Endothelial cell of umbilical vein (primary cell): ENCODE measurements at regions of chr18 and their contacts with region 1.

Region 1: DNA sequence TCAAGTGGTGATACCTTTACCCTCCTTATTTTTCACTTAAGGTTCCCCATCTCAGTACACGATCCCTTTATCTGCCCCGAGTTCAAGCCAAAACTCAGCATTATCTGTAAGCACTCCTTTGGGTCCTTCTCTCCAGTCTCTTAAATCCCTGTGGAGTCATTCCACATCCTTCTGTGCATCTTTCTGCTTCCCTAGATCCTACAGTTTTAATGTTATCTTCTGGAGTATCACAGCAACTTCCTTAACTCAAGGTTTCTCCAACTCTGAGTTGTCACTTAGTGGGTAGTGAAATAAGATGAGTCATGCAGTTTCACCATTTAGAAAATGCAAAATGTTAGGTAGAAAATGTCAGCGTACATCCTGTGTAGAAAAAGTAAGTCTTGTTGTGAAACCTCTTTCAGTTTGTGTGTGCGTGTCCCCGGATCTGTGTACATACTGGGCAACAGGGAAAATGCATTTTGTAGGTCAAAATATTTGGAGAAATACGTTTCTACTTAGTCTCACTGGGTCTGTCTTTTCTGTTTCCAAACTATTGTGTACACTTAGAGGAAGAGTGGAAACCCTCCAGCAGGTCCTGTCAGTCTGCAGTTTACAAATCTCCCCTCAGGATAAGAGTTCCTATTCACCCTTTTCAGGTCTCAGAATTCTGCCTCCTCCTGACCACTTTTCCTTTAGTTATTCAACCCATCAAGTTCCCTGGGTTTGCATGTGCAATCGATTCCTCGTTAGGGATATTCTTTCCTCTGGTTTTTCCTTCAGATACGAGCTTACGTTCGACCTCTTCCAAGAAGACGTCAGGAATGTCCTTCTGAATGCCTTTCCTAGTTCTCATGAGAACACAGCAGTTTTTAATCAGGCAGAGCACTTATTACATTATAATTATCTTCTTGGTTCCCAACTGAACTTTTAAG is 154.8 kb downstream of the TGIF1 start:
- DNase-seq: peak; percentile 90
- H3K4me3 ChIP-seq: peak overlapping the region; percentile 41 to 95 (median 83)
- H3K27ac ChIP-seq: peak overlapping the region; percentile 96
- H3K4me1 ChIP-seq: peaks cover 43% of the 10 kb centered on the region
- H3K27me3 ChIP-seq: no peaks in the 10 kb centered on the region
- CTCF ChIP-seq: no peak
- POLR2A ChIP-seq: peak; percentile 32

Region 2: DNA sequence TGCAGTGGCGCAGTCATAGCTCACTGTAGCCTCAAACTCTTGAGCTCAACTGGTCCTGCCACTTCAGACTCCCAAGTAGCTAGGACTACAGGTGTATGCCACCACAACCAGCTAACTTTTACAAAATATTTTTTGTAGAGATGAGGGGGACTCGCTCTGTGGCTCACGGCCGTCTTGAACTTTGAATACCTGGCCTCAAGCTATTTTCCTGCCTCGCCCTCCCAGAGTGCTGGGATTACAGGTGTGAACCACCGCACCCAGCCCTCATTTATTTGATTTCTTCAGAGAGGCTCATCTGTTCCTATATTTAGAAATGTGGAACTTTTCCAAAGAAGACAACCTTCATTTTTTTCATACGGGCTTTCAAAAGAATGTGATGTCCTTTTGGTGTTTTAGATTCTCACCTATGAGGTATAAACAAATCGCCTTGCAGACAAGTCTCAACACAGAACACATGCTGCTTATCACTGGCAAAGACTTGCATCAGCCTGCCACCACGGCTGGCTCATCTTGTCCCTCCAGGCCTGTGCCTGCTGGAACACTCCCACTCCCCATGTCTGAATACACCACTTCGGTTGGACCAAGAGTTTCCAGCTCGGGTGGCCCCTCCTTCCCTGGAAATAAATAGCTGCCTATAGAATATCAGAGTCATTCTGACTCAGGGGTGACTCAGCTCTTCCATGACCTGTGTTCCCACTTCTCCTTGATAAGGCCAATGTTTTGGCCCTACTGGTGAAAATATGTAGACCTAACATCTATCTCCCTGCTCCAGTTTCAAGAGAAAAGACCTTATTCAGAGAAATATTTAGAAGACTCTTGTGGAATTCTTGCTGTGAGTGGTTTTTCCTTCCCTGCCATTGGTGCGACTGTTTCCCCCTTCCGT is 47.9 kb after region 1 on chr18:
- CTCF ChIA-PET with region 1: interaction called, 3 read pairs
- POLR2A ChIA-PET with region 1: interaction called, 5 read pairs
- dilution Hi-C with region 1: no loop called
- intact Hi-C with region 1: loop called (anchors 1 kb)
- DNase-seq: peak; percentile 97
- H3K4me3 ChIP-seq: peak overlapping the region in 1 of 3 experiments; percentile 42
- H3K27ac ChIP-seq: peak overlapping the region; percentile 83
- H3K4me1 ChIP-seq: peaks cover 46% of the 10 kb centered on the region
- H3K27me3 ChIP-seq: no peaks in the 10 kb centered on the region
- CTCF ChIP-seq: peak in 1 of 2 donors; percentile 4
- POLR2A ChIP-seq: no peak